Transverse colon (tissue), 4 donors: ENCODE measurements at regions of chr11 and their contacts with region 1.

Region 1: GRCh38 chr11:12331239-12331874 is 46.0 kb upstream of the PARVA start:
- DNase-seq: peak; percentile 85
- H3K4me3 ChIP-seq: no peak overlapping the region
- H3K27ac ChIP-seq: peak overlapping the region; percentile 42 to 76 (median 67)
- H3K4me1 ChIP-seq: peaks cover 2 to 12% (median 4%) of the 10 kb centered on the region in 4 donors
- H3K27me3 ChIP-seq: no peaks in the 10 kb centered on the region
- CTCF ChIP-seq: peak; percentile 66 to 90 (median 74)
- EP300 ChIP-seq: no peak
- POLR2A ChIP-seq: no peak

Region 2: GRCh38 chr11:12280838-12281565 is 50.4 kb before region 1 on chr11:
- in situ Hi-C with region 1: no loop called
- intact Hi-C with region 1: no loop called
- DNase-seq: no peak
- H3K4me3 ChIP-seq: no peak overlapping the region
- H3K27ac ChIP-seq: no peak overlapping the region
- H3K4me1 ChIP-seq: peaks cover 0 to 22% (median 0%) of the 10 kb centered on the region in 4 donors
- H3K27me3 ChIP-seq: no peaks in the 10 kb centered on the region
- CTCF ChIP-seq: no peak
- EP300 ChIP-seq: no peak
- POLR2A ChIP-seq: no peak

Region 3: DNA sequence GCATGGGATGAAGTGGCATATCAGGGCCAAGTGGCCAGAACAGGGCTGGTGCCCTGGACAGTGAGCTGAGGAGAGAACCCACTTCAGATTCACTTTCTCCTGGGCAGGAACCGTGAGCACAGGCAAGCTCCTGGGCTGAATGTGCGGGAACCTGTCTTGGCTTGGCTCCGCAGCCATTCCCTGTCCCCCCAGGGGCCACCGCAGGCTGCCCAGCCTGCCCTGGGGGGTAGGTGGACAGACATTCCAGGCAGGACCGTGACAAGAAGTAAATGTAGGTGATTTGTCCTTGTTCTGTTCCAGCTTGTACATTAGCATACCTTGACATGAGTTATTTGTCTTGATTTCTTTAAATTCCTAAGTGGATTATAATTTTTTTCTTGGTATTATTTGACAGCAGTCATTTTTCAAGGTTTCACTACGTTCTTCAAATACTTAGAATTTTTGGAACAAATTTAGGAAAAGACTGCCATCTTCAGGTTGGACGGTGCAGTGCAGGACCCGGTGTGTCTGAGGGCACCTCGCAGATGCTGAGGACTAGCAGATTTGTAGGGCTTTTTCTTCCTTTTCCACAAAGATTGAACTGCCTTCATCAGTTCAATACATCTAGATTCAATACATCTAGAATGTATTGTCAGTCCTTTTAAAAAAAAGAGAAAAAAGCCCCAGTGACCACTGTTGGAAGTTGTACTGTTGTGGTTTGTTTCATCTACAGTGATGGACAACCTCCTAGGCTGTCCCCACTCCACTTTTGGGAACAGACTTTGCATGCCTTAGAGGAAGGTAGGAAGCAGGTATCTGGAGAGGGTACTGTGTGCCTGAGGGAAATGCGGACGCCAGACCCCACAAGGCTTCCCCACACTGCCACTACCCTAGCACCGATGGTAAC is 562.7 kb after region 1 on chr11:
- in situ Hi-C with region 1: loop called (anchors 5 to 25 kb)
- intact Hi-C with region 1: loop called (anchors 5 kb)
- DNase-seq: peak; percentile 74
- H3K4me3 ChIP-seq: no peak overlapping the region
- H3K27ac ChIP-seq: peak overlapping the region; percentile 17 to 74 (median 52)
- H3K4me1 ChIP-seq: peaks cover 3 to 31% (median 15%) of the 10 kb centered on the region in 4 donors
- H3K27me3 ChIP-seq: no peaks in the 10 kb centered on the region
- CTCF ChIP-seq: peak; percentile 86 to 94 (median 91)
- EP300 ChIP-seq: no peak
- POLR2A ChIP-seq: no peak